ENCODE measurements at regions of chr13 and their contacts with region 1.

Region 1: GRCh38 chr13:99033814-99034213 is 56.0 kb upstream of the DOCK9 start:
- DNase-seq: peak; percentile 49
- H3K4me3 Mint-ChIP-seq: no peak overlapping the region
- H3K27ac Mint-ChIP-seq: no peak overlapping the region
- H3K4me1 Mint-ChIP-seq: peaks cover 22% of the 10 kb centered on the region
- H3K27me3 Mint-ChIP-seq: no peaks in the 10 kb centered on the region
- CTCF ChIP-seq: peak; percentile 70

Region 2: DNA sequence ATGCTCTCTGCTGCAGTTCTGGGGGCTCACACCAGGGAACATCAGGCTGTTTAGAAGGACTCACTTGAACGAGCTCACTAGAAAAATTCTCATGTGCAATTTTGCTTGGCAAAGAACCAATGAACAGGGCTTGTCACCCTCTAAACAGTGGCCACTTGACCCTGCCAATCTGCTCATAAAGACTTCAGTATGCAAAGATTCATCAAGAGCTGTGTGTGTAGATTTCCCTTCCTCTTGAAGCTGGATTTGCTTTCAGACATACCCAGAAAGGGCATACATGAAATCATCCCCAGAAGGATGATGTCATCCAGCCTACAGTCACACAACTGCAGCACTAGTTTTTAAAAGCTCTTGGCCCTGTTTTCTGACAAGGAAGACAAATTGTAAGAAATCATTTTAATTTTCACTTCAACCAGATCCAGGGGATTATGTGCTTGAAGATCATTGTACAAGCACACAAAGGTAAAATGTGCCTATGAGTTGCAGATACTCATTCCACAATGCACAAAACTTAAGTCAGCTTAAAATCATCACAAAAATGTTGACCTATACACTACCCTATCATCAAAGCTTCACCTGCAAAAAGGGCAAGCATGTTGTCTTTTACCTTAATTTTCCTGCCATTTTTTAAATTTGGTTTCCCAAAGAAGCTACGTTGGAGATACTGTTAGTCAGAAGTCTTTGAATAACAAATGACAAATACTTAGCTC is 451.7 kb before region 1 on chr13:
- CTCF ChIA-PET with region 1: no interaction called
- POLR2A ChIA-PET with region 1: no interaction called
- intact Hi-C with region 1: no loop called
- DNase-seq: no peak
- H3K4me3 Mint-ChIP-seq: no peak overlapping the region
- H3K27ac Mint-ChIP-seq: no peak overlapping the region
- H3K4me1 Mint-ChIP-seq: peaks cover 12% of the 10 kb centered on the region
- H3K27me3 Mint-ChIP-seq: no peaks in the 10 kb centered on the region
- CTCF ChIP-seq: no peak

Region 3: DNA sequence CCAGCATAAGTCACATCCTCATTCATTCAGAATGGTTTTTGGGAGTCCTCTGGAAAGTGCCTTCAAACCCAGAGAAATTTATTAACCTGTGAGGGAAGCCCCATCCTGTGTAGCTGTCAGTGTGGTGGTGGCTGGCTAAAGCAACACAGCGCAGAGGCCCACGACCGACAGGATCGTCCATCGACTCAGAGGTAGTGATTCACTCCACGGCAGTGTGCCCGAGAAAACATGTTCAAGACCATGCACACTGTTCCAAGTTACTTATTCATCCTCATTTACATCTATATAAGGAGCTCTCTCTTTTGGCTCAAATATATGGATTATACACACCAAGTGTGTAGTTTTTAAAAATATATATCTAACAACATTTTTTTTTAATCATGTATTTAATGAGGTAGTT is 185.1 kb before region 1 on chr13:
- CTCF ChIA-PET with region 1: interaction called, 15 read pairs
- POLR2A ChIA-PET with region 1: no interaction called
- intact Hi-C with region 1: no loop called
- DNase-seq: no peak
- H3K4me3 Mint-ChIP-seq: no peak overlapping the region
- H3K27ac Mint-ChIP-seq: no peak overlapping the region
- H3K4me1 Mint-ChIP-seq: peaks cover 3% of the 10 kb centered on the region
- H3K27me3 Mint-ChIP-seq: no peaks in the 10 kb centered on the region
- CTCF ChIP-seq: no peak

Region 4: DNA sequence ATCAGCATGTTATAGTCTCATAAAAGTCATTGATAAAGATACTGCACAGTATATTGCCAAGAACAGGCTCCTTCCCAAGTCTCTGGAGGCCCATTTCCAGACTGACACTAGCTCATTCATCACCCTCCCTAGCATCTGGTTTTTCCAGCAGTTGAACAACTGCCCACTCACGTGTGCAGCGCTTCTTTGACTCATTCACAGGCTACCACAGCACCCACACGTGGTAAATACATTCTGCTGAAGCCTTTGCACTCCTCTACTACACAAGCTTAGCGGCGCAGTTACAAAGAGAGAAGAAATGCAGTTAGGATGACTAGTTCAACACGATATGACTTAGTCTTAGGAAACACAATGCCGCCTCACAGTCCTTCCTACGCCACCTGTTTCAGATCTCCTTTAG is 143.6 kb before region 1 on chr13:
- CTCF ChIA-PET with region 1: interaction called, 25 read pairs
- POLR2A ChIA-PET with region 1: interaction called, 12 read pairs
- intact Hi-C with region 1: loop called (anchors 1 kb)
- DNase-seq: peak; percentile 85
- H3K4me3 Mint-ChIP-seq: no peak overlapping the region
- H3K27ac Mint-ChIP-seq: peak overlapping the region; percentile 71
- H3K4me1 Mint-ChIP-seq: peaks cover 19% of the 10 kb centered on the region
- H3K27me3 Mint-ChIP-seq: no peaks in the 10 kb centered on the region
- CTCF ChIP-seq: no peak

Region 5: GRCh38 chr13:99045396-99045795 is 11.6 kb after region 1 on chr13:
- CTCF ChIA-PET with region 1: interaction called, 30 read pairs
- POLR2A ChIA-PET with region 1: interaction called, 4 read pairs
- intact Hi-C with region 1: no loop called
- DNase-seq: no peak
- H3K4me3 Mint-ChIP-seq: peak overlapping the region; percentile 13
- H3K27ac Mint-ChIP-seq: peak overlapping the region; percentile 90
- H3K4me1 Mint-ChIP-seq: peaks cover 45% of the 10 kb centered on the region
- H3K27me3 Mint-ChIP-seq: no peaks in the 10 kb centered on the region
- CTCF ChIP-seq: no peak

Region 6: GRCh38 chr13:99269627-99270241 is 235.9 kb after region 1 on chr13:
- CTCF ChIA-PET with region 1: interaction called, 3 read pairs
- POLR2A ChIA-PET with region 1: no interaction called
- intact Hi-C with region 1: loop called (anchors 2 kb)
- DNase-seq: peak; percentile 54
- H3K4me3 Mint-ChIP-seq: no peak overlapping the region
- H3K27ac Mint-ChIP-seq: no peak overlapping the region
- H3K4me1 Mint-ChIP-seq: no peaks in the 10 kb centered on the region
- H3K27me3 Mint-ChIP-seq: no peaks in the 10 kb centered on the region
- CTCF ChIP-seq: peak; percentile 43

Region 7: DNA sequence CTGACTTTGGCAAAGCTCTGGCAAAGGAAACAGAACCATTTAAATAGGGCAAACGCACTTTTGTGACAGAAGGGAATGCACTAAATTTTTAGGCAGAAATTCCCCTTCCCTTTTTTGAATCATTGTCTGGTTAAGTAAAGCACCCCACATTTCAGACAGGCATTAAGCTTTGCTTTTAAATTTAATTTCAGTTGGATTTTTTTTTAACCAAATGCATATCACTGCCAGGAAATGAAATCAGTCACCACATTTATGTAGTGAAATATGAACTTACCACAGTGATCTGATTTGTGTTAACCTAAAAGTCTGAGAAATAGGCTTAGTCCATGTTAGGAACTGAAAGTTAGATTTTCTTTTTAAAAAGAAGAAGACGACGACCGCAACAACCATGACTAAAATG is 262.6 kb after region 1 on chr13:
- CTCF ChIA-PET with region 1: no interaction called
- POLR2A ChIA-PET with region 1: no interaction called
- intact Hi-C with region 1: no loop called
- DNase-seq: no peak
- H3K4me3 Mint-ChIP-seq: no peak overlapping the region
- H3K27ac Mint-ChIP-seq: no peak overlapping the region
- H3K4me1 Mint-ChIP-seq: no peaks in the 10 kb centered on the region
- H3K27me3 Mint-ChIP-seq: no peaks in the 10 kb centered on the region
- CTCF ChIP-seq: no peak

Measured in MCF 10A (cell line).